HEK293 (cell line): ENCODE measurements at regions of chr6 and their contacts with region 1.

Region 1: DNA sequence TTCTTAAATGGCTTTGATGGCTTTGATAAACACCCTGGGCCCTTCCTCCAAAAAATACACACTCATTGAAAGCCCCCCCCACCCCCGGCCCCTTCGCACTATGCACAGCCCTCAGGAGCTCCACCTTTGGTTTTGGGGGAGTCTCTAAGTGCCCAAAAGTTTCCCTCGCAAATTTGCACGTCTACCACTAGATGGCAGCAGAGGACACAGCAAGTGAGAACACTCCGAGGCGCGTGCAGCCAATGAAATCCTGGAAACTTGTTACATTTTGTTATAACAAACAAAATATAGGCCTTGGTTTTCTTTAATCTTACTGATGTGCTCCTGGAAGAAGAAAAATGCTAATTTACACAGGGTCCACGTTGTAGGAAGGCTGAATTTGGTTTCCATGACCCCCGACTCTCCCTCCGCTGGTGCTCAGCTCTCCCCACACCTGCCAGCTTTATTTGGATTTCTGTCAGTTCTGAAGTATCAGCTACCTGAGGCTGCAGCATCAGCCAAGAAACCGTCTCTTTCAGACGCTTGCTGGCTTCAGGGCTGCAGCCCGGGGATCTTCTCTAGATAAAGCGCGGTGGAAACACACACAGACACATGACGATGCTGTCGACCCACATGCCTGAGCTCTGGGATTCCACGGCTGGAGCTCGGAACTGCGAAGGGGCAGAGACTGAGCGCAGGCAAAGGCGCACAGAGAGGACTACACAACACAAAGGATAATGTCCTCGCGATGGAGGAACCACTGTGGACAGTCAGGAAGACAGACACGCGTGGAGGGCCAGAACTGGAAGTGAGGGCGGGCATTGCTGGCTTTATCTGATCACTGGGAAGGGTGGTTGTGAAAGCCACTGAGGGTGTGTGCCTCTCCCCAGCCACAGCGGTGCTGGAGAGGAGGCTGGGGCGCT is 148.4 kb upstream of the RPS6KA2 start:
- H3K4me3 ChIP-seq: no peak overlapping the region
- H3K27ac ChIP-seq: no peak overlapping the region
- H3K4me1 ChIP-seq: no peaks in the 10 kb centered on the region
- CTCF ChIP-seq: peak; percentile 27; the same call in 1 of the 2 replicates

Region 2: GRCh38 chr6:166739117-166739975 is 36.1 kb before region 1 on chr6:
- CTCF ChIA-PET with region 1: interaction called, 11 read pairs
- POLR2A ChIA-PET with region 1: no interaction called
- H3K4me3 ChIP-seq: no peak overlapping the region
- H3K27ac ChIP-seq: no peak overlapping the region
- H3K4me1 ChIP-seq: no peaks in the 10 kb centered on the region
- CTCF ChIP-seq: no peak

Region 3: DNA sequence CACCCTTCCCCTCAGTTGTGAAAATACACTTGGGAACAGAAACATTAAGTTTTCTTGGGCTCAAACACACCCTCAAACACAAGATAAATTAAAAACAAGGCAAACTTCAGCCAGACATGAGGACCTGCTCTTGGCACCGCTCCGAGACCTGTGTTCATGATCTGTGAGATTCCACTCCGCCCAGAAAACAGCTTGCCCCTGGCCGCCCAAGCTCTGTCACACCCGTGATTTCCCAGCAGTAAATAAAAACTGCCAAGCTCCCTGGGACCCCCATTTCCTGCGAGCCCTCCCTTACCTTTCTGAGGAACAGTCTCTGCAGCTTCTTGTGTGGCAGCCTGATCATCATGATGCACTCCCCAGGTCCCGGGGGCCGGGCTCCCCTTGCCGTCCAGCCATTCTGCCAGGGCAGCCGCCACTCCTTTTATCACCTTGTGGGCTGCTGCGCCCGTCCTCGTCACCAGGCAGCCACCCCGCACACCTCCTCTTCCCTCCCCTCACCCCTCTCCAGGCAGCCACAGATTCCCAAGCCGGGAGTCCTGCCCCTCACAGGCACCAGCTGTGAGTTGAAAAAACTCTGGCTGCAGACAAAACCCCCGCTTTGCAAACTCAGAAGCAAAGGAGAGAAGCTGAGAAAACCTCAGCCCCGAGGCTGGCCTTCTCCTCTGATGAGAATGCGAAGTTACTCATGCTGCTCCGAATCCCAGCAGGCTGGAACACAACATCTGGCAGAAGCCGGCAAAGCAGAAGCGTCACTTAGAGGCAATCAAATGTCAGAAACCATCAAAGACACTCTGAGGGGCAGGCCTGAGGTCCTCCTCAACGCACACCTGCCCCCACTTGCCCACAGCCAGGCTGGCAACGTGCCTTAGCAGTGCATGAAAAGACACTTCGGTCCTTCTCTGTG is 17.9 kb before region 1 on chr6:
- CTCF ChIA-PET with region 1: interaction called, 120 read pairs
- POLR2A ChIA-PET with region 1: no interaction called
- H3K4me3 ChIP-seq: no peak overlapping the region
- H3K27ac ChIP-seq: no peak overlapping the region
- H3K4me1 ChIP-seq: no peaks in the 10 kb centered on the region
- CTCF ChIP-seq: no peak

Region 4: DNA sequence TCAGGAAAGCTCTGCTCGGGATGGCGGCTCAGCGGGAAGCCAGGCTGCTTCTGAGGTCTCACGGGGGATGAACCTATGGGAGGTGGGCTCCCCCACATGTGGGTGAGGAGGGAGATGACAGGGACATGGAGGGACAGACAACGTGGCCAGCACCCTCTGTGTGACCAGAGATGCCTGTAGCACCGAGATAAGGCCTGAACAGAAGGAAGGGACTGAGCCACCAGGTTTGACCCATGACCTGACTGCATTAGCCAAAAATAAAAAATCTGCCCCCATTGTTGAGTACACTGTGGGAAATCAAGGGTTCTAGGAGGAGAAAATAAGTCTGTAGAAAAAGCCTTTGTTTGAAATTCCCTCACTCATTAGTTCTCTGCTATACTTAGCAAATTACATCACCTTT is 75.2 kb after region 1 on chr6:
- CTCF ChIA-PET with region 1: no interaction called
- POLR2A ChIA-PET with region 1: no interaction called
- H3K4me3 ChIP-seq: no peak overlapping the region
- H3K27ac ChIP-seq: no peak overlapping the region
- H3K4me1 ChIP-seq: no peaks in the 10 kb centered on the region
- CTCF ChIP-seq: no peak

Region 5: DNA sequence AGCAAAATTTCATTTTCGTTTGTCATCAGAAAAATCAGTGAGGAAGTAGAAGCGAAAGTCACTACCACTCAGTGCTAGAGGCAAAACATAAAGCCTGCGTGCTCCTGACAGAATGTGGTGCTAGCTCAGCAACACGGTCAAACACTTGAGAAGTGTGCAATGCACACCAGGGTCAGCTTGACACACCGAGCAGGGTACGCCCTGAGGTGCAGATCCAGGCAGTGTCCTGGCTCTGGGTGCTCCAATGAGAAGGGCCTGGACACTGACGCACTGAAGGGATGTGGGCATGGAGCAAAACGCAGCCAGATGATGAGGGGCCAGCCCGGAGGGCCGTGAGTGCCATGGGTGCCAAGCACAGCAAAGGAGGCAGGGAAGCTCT is 175.0 kb after region 1 on chr6:
- CTCF ChIA-PET with region 1: interaction called, 16 read pairs
- POLR2A ChIA-PET with region 1: no interaction called
- H3K4me3 ChIP-seq: no peak overlapping the region
- H3K27ac ChIP-seq: no peak overlapping the region
- H3K4me1 ChIP-seq: no peaks in the 10 kb centered on the region
- CTCF ChIP-seq: no peak

Region 6: GRCh38 chr6:167141667-167142432 is 366.4 kb after region 1 on chr6:
- CTCF ChIA-PET with region 1: interaction called, 80 read pairs
- POLR2A ChIA-PET with region 1: interaction called, 3 read pairs
- H3K4me3 ChIP-seq: no peak overlapping the region
- H3K27ac ChIP-seq: no peak overlapping the region
- H3K4me1 ChIP-seq: no peaks in the 10 kb centered on the region
- CTCF ChIP-seq: peak; percentile 72